H1 (cell line): ENCODE measurements at regions of chr11 and their contacts with region 1.

Region 1: GRCh38 chr11:34791780-34792542 is 124.2 kb downstream of the APIP start:
- DNase-seq: no peak
- H3K4me3 ChIP-seq: no peak overlapping the region
- H3K27ac ChIP-seq: no peak overlapping the region
- H3K4me1 ChIP-seq: peaks cover 0 to 5% (median 3%) of the 10 kb centered on the region in 4 experiments; a peak in 2 of 7 replicates
- H3K27me3 ChIP-seq: no peaks in the 10 kb centered on the region
- CTCF ChIP-seq: peak in 2 of 3 experiments; percentile 4 to 21; a peak in 1 of 4 replicates
- EP300 ChIP-seq: no peak
- POLR2A ChIP-seq: no peak
- RAD21 ChIP-seq: peak in 1 of 2 experiments; percentile 1; a peak in 1 of 4 replicates

Region 2: GRCh38 chr11:34425867-34426266 is 366.1 kb before region 1 on chr11:
- CTCF ChIA-PET with region 1: no interaction called
- POLR2A ChIA-PET with region 1: no interaction called
- DNase-seq: no peak
- H3K4me3 ChIP-seq: no peak overlapping the region
- H3K27ac ChIP-seq: no peak overlapping the region
- H3K4me1 ChIP-seq: no peaks in the 10 kb centered on the region
- H3K27me3 ChIP-seq: no peaks in the 10 kb centered on the region
- CTCF ChIP-seq: no peak
- EP300 ChIP-seq: no peak
- POLR2A ChIP-seq: no peak
- RAD21 ChIP-seq: no peak

Region 3: DNA sequence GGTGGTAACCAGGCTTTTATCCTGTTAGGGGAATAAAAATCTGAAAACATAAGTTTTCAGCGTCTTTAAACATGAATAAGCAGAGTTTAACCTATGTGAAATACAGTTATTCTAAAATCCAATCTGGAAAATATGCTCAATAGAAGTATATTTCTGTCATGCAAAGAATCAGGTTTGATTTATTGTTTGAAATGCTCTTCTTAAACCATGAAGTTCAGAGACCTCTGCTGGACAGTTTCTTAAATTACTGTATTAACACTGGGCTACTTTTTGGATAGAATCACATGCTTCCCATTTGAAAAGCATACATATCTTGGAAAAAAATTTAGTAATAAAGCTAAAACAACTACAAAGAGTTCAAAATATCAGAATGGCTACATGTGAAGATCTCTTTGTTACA is 98.9 kb after region 1 on chr11:
- CTCF ChIA-PET with region 1: interaction called, 11 read pairs
- POLR2A ChIA-PET with region 1: no interaction called
- DNase-seq: no peak
- H3K4me3 ChIP-seq: no peak overlapping the region
- H3K27ac ChIP-seq: no peak overlapping the region
- H3K4me1 ChIP-seq: no peaks in the 10 kb centered on the region
- H3K27me3 ChIP-seq: no peaks in the 10 kb centered on the region
- CTCF ChIP-seq: peak in 1 of 3 experiments; percentile 29; a peak in 2 of 4 replicates
- EP300 ChIP-seq: no peak
- POLR2A ChIP-seq: no peak
- RAD21 ChIP-seq: peak; percentile 44 to 54